ENCODE measurements at regions of chr5 and their contacts with region 1.

Region 1: GRCh38 chr5:39547553-39548154 is 122.9 kb upstream of the DAB2 start:
- DNase-seq: no peak
- H3K4me3 ChIP-seq: no peak overlapping the region
- H3K27ac ChIP-seq: no peak overlapping the region
- H3K4me1 ChIP-seq: peaks cover 4% of the 10 kb centered on the region
- H3K27me3 ChIP-seq: no peaks in the 10 kb centered on the region
- CTCF ChIP-seq: peak; percentile 22 to 69 (median 49)

Region 2: GRCh38 chr5:39376293-39376714 is 171.3 kb before region 1 on chr5:
- dilution Hi-C with region 1: loop called (anchors 25 kb)
- DNase-seq: no peak
- H3K4me3 ChIP-seq: no peak overlapping the region
- H3K27ac ChIP-seq: no peak overlapping the region
- H3K4me1 ChIP-seq: no peaks in the 10 kb centered on the region
- H3K27me3 ChIP-seq: no peaks in the 10 kb centered on the region
- CTCF ChIP-seq: peak; percentile 54 to 83 (median 78)

Region 3: GRCh38 chr5:39461026-39461682 is 86.5 kb before region 1 on chr5:
- dilution Hi-C with region 1: no loop called
- DNase-seq: no peak
- H3K4me3 ChIP-seq: no peak overlapping the region
- H3K27ac ChIP-seq: no peak overlapping the region
- H3K4me1 ChIP-seq: no peaks in the 10 kb centered on the region
- H3K27me3 ChIP-seq: no peaks in the 10 kb centered on the region
- CTCF ChIP-seq: no peak